ENCODE measurements at regions of chr19 and their contacts with region 1.

Region 1: DNA sequence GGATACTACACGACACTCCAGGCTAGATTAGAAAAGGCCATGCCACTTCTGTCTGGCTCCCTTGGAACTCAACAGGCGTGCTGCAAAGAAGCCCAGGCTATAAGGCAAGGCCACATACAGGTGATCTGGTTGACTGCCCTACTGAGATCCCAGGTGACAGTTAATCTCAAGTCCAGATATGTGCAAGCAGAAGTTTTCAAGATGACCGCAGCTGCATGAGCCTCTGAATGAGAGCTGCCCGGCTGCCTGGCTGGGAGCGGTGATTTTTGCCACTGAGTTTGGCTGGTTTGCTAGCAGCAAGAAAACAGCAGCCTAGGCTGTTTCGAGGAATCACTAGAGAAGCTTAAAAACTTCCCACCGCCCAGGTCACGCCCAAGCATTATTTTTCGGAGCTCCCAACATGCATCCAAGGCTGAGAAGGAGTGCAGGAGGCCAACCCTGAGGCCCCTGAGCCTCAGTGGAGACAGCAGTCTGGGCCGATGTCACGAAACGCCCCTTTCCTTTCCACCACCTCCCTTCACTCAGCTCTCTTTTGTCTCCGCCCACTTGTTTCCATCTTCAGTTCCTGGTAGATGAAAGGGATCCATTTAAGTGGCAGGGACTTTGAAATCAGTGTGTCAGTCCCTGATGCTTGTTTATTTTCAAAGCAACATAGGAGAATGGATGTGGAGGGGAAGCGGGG is 14.0 kb upstream of the URI1 start:
- DNase-seq: no peak
- H3K4me3 ChIP-seq: no peak overlapping the region
- H3K27ac ChIP-seq: no peak overlapping the region
- H3K4me1 ChIP-seq: no peaks in the 10 kb centered on the region
- H3K27me3 ChIP-seq: no peaks in the 10 kb centered on the region
- CTCF ChIP-seq: no peak

Region 2: GRCh38 chr19:29819986-29820385 is 108.1 kb before region 1 on chr19:
- CTCF ChIA-PET with region 1: no interaction called
- dilution Hi-C with region 1: loop called (anchors 5 kb)
- in situ Hi-C with region 1: no loop called
- intact Hi-C with region 1: no loop called
- DNase-seq: no peak
- H3K4me3 ChIP-seq: no peak overlapping the region
- H3K27ac ChIP-seq: no peak overlapping the region
- H3K4me1 ChIP-seq: no peaks in the 10 kb centered on the region
- H3K27me3 ChIP-seq: no peaks in the 10 kb centered on the region
- CTCF ChIP-seq: no peak

Measured in mammary epithelial cell (primary cell).